ENCODE measurements at regions of chr12 and their contacts with region 1.

Region 1: GRCh38 chr12:103626498-103626897 is 39.4 kb downstream of the STAB2 start:
- DNase-seq: peak; percentile 72
- ATAC-seq: peak; percentile 85

Region 2: GRCh38 chr12:103482365-103482764 is 144.1 kb before region 1 on chr12:
- intact Hi-C with region 1: no loop called
- DNase-seq: no peak
- ATAC-seq: no peak

Region 3: GRCh38 chr12:103742349-103742932 is 115.9 kb after region 1 on chr12:
- intact Hi-C with region 1: loop called (anchors 5 kb)
- DNase-seq: no peak
- ATAC-seq: peak; percentile 53

Region 4: GRCh38 chr12:103840876-103841689 is 214.6 kb after region 1 on chr12 and contains the start of gene NT5DC3:
- intact Hi-C with region 1: loop called (anchors 10 kb)
- DNase-seq: peak; percentile 92
- ATAC-seq: peak; percentile 95
- total RNA-seq, gene NT5DC3: 3.1 TPM

Region 5: GRCh38 chr12:103877934-103878510 is 251.5 kb after region 1 on chr12:
- intact Hi-C with region 1: loop called (anchors 10 kb)
- DNase-seq: no peak
- ATAC-seq: peak; percentile 70

Region 6: GRCh38 chr12:103930034-103930786 is 303.7 kb after region 1 on chr12 and contains the start of gene HSP90B1:
- intact Hi-C with region 1: loop called (anchors 5 kb)
- DNase-seq: peak; percentile 100
- ATAC-seq: peak; percentile 96
- total RNA-seq, gene HSP90B1: 402 TPM

Measured in Right ventricle myocardium inferior (tissue), 1 donor.